PC-9 (cell line): ENCODE measurements at regions of chr15 and their contacts with region 1.

Region 1: GRCh38 chr15:59074607-59075006 is 30.3 kb upstream of the CCNB2 start:
- DNase-seq: no peak
- H3K4me3 ChIP-seq: no peak overlapping the region
- H3K27ac ChIP-seq: no peak overlapping the region
- H3K4me1 ChIP-seq: no peaks in the 10 kb centered on the region
- H3K27me3 ChIP-seq: no peaks in the 10 kb centered on the region
- CTCF ChIP-seq: no peak

Region 2: GRCh38 chr15:57485869-57486268 is 1588.7 kb before region 1 on chr15:
- CTCF ChIA-PET with region 1: no interaction called
- POLR2A ChIA-PET with region 1: interaction called, 63 read pairs
- intact Hi-C with region 1: no loop called
- DNase-seq: peak; percentile 85 to 93
- H3K4me3 ChIP-seq: no peak overlapping the region
- H3K27ac ChIP-seq: peak overlapping the region; percentile 45
- H3K4me1 ChIP-seq: peaks cover 20% of the 10 kb centered on the region
- H3K27me3 ChIP-seq: no peaks in the 10 kb centered on the region
- CTCF ChIP-seq: no peak

Region 3: GRCh38 chr15:57667171-57667849 is 1407.3 kb before region 1 on chr15:
- CTCF ChIA-PET with region 1: interaction called, 12 read pairs
- POLR2A ChIA-PET with region 1: no interaction called
- intact Hi-C with region 1: no loop called
- DNase-seq: peak in 1 of 2 experiments; percentile 20
- H3K4me3 ChIP-seq: no peak overlapping the region
- H3K27ac ChIP-seq: no peak overlapping the region
- H3K4me1 ChIP-seq: no peaks in the 10 kb centered on the region
- H3K27me3 ChIP-seq: no peaks in the 10 kb centered on the region
- CTCF ChIP-seq: no peak

Region 4: DNA sequence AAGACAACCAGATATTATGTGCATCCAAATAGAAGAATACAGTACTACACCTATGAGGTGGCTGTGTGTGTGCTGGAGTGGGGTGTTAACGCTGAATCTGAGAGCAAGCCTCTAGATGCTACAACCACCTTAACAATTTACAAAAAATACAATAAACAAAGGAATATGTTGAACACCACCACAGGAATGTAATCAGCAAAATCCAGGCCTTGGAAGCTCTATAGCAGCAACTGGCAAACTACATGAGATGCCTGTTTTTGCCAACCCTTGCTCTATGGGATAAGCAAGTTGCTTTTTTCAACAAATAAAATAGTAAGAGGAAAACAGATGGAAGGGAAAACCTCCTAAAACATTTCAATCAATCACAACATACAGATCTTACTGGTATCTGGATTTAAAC is 165.0 kb before region 1 on chr15:
- CTCF ChIA-PET with region 1: no interaction called
- POLR2A ChIA-PET with region 1: no interaction called
- intact Hi-C with region 1: no loop called
- DNase-seq: no peak
- H3K4me3 ChIP-seq: no peak overlapping the region
- H3K27ac ChIP-seq: no peak overlapping the region
- H3K4me1 ChIP-seq: no peaks in the 10 kb centered on the region; the same call in 1 of the 2 replicates
- H3K27me3 ChIP-seq: no peaks in the 10 kb centered on the region
- CTCF ChIP-seq: no peak

Region 5: GRCh38 chr15:59002418-59002859 is 72.2 kb before region 1 on chr15:
- CTCF ChIA-PET with region 1: no interaction called
- POLR2A ChIA-PET with region 1: no interaction called
- intact Hi-C with region 1: loop called (anchors 10 kb)
- DNase-seq: no peak
- H3K4me3 ChIP-seq: no peak overlapping the region
- H3K27ac ChIP-seq: no peak overlapping the region
- H3K4me1 ChIP-seq: no peaks in the 10 kb centered on the region
- H3K27me3 ChIP-seq: no peaks in the 10 kb centered on the region
- CTCF ChIP-seq: no peak

Region 6: GRCh38 chr15:59039225-59039624 is 35.4 kb before region 1 on chr15:
- CTCF ChIA-PET with region 1: no interaction called
- POLR2A ChIA-PET with region 1: no interaction called
- intact Hi-C with region 1: no loop called
- DNase-seq: no peak
- H3K4me3 ChIP-seq: no peak overlapping the region
- H3K27ac ChIP-seq: no peak overlapping the region
- H3K4me1 ChIP-seq: no peaks in the 10 kb centered on the region
- H3K27me3 ChIP-seq: no peaks in the 10 kb centered on the region
- CTCF ChIP-seq: no peak

Region 7: DNA sequence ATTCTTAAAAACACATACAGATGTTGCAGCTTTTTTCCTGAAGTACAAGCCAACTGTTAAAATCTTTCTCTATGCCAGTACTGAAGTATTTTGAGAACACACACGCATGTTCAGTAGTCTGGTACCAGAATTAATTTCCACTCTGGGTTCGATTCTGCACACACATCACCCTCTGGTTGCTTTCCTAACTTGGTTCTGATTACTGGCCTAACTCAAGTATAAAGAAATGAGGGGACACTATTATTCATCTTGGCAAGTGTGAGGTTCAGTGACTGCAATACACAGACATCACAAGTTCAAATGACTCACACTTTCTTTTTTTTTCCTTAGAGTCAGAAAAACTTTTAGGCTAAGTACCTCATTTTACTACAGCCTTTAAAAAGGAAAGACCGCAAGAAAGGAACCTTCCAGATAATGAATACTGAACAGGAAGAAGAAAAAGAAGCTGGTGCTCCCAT is 94.7 kb after region 1 on chr15:
- CTCF ChIA-PET with region 1: interaction called, 11 read pairs
- POLR2A ChIA-PET with region 1: no interaction called
- intact Hi-C with region 1: no loop called
- DNase-seq: no peak
- H3K4me3 ChIP-seq: no peak overlapping the region
- H3K27ac ChIP-seq: peak overlapping the region; percentile 71
- H3K4me1 ChIP-seq: peaks cover 17% of the 10 kb centered on the region
- H3K27me3 ChIP-seq: no peaks in the 10 kb centered on the region
- CTCF ChIP-seq: no peak

Region 8: GRCh38 chr15:59221511-59222505 is 147.2 kb after region 1 on chr15:
- CTCF ChIA-PET with region 1: no interaction called
- POLR2A ChIA-PET with region 1: no interaction called
- intact Hi-C with region 1: no loop called
- DNase-seq: no peak
- H3K4me3 ChIP-seq: no peak overlapping the region
- H3K27ac ChIP-seq: no peak overlapping the region
- H3K4me1 ChIP-seq: no peaks in the 10 kb centered on the region
- H3K27me3 ChIP-seq: no peaks in the 10 kb centered on the region
- CTCF ChIP-seq: no peak